ENCODE measurements at regions of chr16 and their contacts with region 1.

Region 1: DNA sequence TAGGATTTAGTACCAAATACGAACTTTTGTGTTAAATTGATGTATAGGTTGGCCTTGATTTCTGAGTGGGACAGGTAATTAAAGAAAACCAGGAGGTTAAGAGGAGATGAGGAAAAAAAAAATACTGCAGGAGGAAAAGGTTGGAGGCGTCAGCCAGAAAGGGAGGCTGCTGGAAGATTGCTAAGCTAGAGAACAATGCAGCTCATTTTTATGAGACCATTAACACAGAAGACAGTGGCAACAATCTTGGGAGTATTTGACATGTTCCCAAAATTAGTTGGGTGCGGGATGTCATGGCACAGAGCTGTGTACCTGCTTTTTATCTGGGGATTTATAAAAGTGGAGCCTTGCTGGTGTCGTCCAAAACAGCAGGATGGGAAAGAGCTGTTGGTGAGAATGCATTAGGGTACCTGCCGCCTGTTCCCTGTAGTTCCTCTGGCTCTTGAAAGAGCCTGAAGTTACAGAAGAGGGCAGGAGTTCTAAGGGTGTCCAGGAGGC is 229.3 kb downstream of the RBFOX1 start:
- DNase-seq: no peak
- ATAC-seq: no peak
- H3K4me3 ChIP-seq: no peak overlapping the region
- H3K27ac ChIP-seq: no peak overlapping the region
- H3K4me1 ChIP-seq: no peaks in the 10 kb centered on the region
- H3K27me3 ChIP-seq: no peaks in the 10 kb centered on the region
- CTCF ChIP-seq: no peak
- EP300 ChIP-seq: no peak
- POLR2A ChIP-seq: no peak
- RAD21 ChIP-seq: no peak

Region 2: DNA sequence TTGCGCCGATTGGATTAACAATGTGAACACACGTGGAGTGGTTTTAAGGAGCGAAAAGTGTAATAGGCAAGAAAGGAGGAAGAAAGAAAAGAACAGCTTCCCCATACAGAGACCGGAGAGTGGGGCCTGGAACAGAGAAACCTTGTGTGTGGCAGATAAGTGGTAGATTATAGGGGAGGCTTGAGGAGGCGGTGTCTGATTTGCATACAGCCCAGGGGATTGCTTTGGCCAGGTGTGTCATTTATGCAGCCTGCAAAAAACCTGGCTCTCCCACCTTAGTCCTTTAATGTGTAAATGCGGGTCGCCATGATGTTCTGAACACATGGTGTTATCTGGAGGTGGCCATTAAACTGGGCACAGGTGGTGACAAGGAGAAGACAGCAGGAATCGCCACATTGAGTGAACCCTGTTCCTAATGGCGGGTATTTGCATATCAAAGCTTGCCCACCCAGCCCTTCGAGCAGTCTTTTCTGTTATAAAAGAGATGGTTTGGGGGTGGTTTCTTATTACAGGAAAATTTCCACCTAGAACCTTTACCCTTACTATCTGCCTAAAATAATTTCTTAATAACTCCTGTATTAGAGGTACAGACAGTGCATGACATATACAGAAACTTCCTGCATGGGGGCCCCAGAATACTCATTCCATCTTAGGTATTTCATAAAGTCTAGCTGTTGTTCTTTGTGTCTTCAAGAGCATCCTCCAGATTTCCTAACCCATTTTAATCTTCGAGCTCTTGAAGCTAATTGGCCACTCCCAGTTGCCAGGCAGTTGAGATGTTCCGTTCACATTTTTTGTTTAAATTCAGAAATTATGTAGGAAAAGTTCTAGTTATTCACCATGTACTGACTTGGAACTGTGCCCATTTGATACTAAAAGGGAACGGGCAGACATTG is 63.2 kb after region 1 on chr16:
- CTCF ChIA-PET with region 1: no interaction called
- POLR2A ChIA-PET with region 1: no interaction called
- in situ Hi-C with region 1: loop called (anchors 10 kb)
- intact Hi-C with region 1: no loop called
- DNase-seq: no peak
- ATAC-seq: no peak
- H3K4me3 ChIP-seq: no peak overlapping the region
- H3K27ac ChIP-seq: no peak overlapping the region
- H3K4me1 ChIP-seq: no peaks in the 10 kb centered on the region
- H3K27me3 ChIP-seq: peaks cover 0 to 10% of the 10 kb centered on the region in 2 experiments; a peak in 1 of 5 replicates
- CTCF ChIP-seq: no peak
- EP300 ChIP-seq: no peak
- POLR2A ChIP-seq: no peak
- RAD21 ChIP-seq: no peak